ENCODE measurements at regions of chr3 and their contacts with region 1.

Region 1: GRCh38 chr3:76943058-76943457 is 96.8 kb upstream of the ROBO2 start:
- DNase-seq: peak; percentile 48
- ATAC-seq: peak; percentile 90
- H3K4me3 ChIP-seq: no peak overlapping the region
- H3K27ac ChIP-seq: peak overlapping the region; percentile 0
- H3K4me1 ChIP-seq: peaks cover 32% of the 10 kb centered on the region
- H3K27me3 ChIP-seq: no peaks in the 10 kb centered on the region
- CTCF ChIP-seq: no peak
- EP300 ChIP-seq: no peak
- POLR2A ChIP-seq: no peak
- RAD21 ChIP-seq: no peak

Region 2: DNA sequence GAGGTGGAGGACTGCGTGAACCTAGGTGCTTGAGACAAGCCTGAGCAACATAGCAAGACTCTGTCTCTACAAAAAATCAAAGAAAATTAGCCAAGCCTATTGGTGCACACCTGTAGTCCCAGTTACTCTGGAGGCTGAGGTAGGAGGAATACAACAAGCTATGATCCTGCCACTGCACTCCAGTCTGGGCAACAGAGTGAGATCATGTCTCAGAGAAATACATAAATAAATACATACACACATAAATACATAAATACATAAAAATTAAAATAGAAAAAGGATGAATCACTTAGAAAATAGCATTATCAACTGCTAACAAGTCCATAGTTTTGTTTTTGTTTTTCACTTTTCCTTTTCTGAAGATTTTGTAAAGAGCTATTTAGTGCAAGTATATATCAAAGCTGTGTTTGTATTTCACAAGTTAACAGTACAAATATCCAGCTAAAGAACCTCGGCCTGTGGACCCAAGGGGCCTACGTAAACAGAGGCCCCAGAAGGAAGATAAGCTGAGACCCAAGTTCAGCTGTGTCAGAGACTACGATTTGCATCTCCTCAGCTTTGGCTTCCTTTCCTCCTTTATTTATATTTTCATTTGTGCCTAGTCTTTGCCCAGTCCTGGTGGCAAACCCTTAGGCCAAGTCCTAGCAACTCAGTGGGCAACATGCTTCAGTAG is 29.7 kb after region 1 on chr3:
- CTCF ChIA-PET with region 1: no interaction called
- POLR2A ChIA-PET with region 1: interaction called, 3 read pairs
- in situ Hi-C with region 1: no loop called
- intact Hi-C with region 1: loop called (anchors 2 kb)
- DNase-seq: peak; percentile 51
- ATAC-seq: peak; percentile 98
- H3K4me3 ChIP-seq: peak overlapping the region in 2 of 3 experiments; percentile 10 to 40; a peak in 2 of 6 replicates
- H3K27ac ChIP-seq: peak overlapping the region; percentile 66
- H3K4me1 ChIP-seq: peaks cover 44% of the 10 kb centered on the region
- H3K27me3 ChIP-seq: no peaks in the 10 kb centered on the region
- CTCF ChIP-seq: no peak
- EP300 ChIP-seq: peak; percentile 55 to 96; a peak in 3 of 4 replicates
- POLR2A ChIP-seq: no peak
- RAD21 ChIP-seq: no peak

Region 3: DNA sequence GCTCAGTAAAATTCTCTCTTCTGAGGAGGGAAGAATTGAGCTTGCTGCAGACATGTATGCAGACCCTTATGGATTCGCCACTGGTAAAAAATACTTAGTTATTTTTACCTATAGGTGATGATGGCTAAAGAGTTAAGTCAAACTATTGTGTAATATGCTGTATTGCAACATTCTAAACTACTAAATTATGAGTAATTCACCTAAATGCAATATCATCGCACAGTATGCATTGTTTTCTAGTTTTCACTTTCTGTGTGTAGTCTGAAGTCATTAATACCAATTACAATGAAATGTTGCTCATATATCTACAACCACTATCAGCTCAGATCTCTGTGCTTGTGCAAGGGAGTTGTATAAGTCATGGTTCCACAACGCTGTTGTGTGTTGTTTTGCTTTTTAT is 48.1 kb after region 1 on chr3:
- CTCF ChIA-PET with region 1: no interaction called
- POLR2A ChIA-PET with region 1: no interaction called
- in situ Hi-C with region 1: no loop called
- intact Hi-C with region 1: loop called (anchors 5 kb)
- DNase-seq: no peak
- ATAC-seq: peak; percentile 40
- H3K4me3 ChIP-seq: no peak overlapping the region
- H3K27ac ChIP-seq: no peak overlapping the region
- H3K4me1 ChIP-seq: peaks cover 16% of the 10 kb centered on the region
- H3K27me3 ChIP-seq: no peaks in the 10 kb centered on the region
- CTCF ChIP-seq: no peak
- EP300 ChIP-seq: no peak
- POLR2A ChIP-seq: no peak
- RAD21 ChIP-seq: no peak

Measured in HepG2 (cell line).